HCT116 (cell line): ENCODE measurements at regions of chr5 and their contacts with region 1.

Region 1: DNA sequence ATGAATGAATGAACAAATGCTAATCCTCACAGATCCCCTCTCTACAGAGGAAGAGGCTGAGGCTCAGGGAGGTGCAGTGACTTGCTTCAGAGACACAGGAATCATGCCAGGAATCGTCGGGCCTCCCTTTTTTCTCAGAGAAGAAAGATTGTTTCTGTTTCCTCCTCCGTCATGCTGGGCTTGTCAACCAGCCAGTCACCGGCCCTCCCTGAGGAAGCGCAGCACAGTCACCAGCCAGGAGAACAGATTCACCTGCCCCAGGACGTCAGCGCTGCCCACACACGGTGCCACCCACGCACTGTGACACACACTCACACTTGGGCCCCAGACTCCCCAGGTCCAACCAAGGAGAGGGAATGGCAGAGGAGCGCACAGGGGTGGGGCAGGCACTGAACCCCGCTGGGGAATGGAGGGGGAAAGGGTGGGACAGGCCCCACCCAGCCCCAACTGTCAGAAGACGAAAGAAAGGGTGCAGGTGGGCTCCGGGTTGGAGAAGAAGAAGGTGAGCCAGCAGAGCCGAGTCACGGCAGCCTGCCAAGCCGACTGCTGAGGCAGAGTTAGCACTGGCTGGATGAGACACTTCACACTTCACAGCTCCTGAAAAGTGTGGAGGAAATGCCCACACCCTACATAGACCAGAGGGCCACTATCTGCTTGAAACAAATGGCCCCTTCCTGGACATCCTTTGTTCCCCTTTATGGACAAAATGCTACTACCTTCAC is 13.8 kb upstream of the ERGIC1 start:
- DNase-seq: peak; percentile 7
- ATAC-seq: peak; percentile 65
- H3K4me3 ChIP-seq: no peak overlapping the region
- H3K27ac ChIP-seq: no peak overlapping the region
- H3K4me1 ChIP-seq: peaks cover 7 to 26% of the 10 kb centered on the region in 2 experiments; a peak in 3 of 4 replicates
- H3K27me3 ChIP-seq: no peaks in the 10 kb centered on the region
- CTCF ChIP-seq: no peak
- POLR2A ChIP-seq: no peak
- RAD21 ChIP-seq: no peak

Region 2: DNA sequence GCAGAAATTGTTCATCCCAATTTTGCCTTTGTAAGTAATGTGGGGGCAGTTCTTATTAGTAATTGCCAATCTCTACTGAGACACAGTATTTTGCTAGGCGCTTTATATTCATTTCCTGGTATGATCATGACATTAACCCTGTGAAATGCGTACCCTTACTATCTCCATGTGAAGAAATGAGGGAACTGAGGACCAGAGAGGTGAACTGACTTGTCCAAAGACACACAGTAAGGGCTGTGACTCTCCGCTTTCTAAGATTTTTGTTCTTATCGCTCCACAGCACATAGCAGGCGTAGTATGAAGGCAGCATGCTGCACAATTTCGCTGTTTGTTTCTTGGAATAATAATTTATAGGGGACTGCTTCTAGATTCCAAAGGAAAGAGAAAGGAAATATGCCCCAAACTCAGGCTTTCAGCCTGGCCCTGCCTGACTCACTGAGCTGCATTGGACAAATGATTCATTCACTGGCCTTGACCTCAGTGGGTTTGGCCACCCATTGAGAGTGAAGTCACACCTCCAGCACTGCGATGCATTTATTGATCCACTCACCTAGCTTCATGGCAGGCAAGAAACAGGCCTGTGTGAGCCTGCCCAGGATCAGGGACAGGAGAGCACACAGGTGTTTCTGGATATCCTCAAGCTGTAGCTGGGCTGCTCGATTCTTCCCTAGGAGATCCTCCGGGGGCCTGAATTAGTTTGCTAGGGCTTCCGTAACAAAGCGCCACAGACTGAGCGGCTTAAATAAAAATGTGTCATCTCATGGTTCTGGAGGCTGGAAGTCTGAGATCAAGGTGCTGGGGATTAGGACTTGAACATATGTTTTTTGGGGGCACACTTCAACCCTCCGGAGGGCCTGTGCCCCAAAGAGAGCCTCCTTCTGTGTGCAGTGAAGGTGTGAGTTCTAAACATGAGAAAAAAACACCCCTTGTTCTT is 42.1 kb before region 1 on chr5:
- CTCF ChIA-PET with region 1: no interaction called
- POLR2A ChIA-PET with region 1: no interaction called
- RAD21 ChIA-PET with region 1: no interaction called
- intact Hi-C with region 1: loop called (anchors 5 kb)
- DNase-seq: peak; percentile 90
- ATAC-seq: peak; percentile 84
- H3K4me3 ChIP-seq: peak overlapping the region; percentile 16 to 47
- H3K27ac ChIP-seq: peak overlapping the region; percentile 68
- H3K4me1 ChIP-seq: peaks cover 30 to 46% of the 10 kb centered on the region in 2 experiments
- H3K27me3 ChIP-seq: no peaks in the 10 kb centered on the region
- CTCF ChIP-seq: no peak
- POLR2A ChIP-seq: no peak
- RAD21 ChIP-seq: no peak

Region 3: DNA sequence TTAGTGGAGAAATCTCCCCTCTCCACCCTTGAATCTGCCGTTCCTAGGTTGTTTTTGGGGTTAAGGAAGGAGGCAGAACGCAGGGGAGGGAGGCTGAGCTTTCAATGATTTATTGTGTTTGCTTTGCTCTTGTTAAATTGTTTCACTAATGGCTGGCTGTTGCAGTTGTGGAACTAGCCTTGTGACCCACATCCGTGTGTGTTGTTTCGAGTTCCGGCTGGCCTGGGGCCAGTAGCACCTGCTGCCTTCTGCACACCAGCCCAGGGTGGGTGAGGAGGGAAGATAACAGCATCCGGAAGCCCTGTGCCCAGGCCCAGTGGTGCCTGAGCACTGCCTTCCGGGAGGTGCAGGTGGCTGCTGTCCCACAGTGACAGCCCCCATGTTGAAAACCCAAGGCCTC is 17.4 kb after region 1 on chr5:
- CTCF ChIA-PET with region 1: no interaction called
- POLR2A ChIA-PET with region 1: no interaction called
- RAD21 ChIA-PET with region 1: no interaction called
- intact Hi-C with region 1: no loop called
- DNase-seq: no peak
- ATAC-seq: no peak
- H3K4me3 ChIP-seq: no peak overlapping the region
- H3K27ac ChIP-seq: no peak overlapping the region
- H3K4me1 ChIP-seq: peaks cover 9 to 34% of the 10 kb centered on the region in 2 experiments; a peak in 3 of 4 replicates
- H3K27me3 ChIP-seq: no peaks in the 10 kb centered on the region
- CTCF ChIP-seq: no peak
- POLR2A ChIP-seq: no peak
- RAD21 ChIP-seq: no peak